ENCODE measurements at regions of chr6 and their contacts with region 1.

Region 1: DNA sequence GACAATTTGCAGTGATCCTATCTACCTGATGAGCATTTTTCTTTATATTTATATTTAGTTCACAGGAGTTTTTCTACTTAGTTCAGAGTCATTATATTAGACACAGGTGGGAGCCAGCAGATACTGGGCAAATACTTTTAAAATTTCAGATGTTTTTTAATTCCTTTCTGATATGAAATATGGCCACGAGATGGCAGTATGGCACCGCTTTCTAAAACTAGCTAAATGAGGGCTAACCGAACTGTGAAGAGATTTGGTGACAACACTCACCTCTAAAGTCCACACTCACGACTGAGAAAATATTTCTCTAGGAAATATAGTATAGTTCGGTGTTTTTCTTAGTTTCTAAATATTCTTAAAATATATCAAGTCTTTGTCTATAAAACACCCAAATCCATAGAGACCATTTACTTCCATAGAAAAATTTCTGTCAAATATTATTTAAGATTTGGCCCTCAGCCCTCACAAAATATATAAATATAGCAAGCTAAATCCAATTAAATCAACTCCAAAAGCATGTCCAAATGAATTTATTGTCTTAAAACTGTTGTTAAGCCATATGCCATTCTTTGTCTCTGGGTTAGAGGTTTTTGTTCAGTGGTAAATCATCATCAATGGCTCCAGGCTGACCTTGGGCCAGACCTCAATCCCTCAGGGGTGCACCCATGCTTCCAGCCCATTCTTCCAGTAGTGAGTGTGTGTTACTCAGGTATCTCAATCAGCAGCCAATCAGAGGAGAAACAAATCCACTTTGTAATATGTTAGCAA is 63.6 kb downstream of the HUS1B start:
- DNase-seq: peak; percentile 81
- ATAC-seq: peak; percentile 75
- H3K4me3 Mint-ChIP-seq: no peak overlapping the region
- H3K27ac Mint-ChIP-seq: no peak overlapping the region
- H3K4me1 Mint-ChIP-seq: peaks cover 5% of the 10 kb centered on the region
- H3K27me3 Mint-ChIP-seq: no peaks in the 10 kb centered on the region

Region 2: DNA sequence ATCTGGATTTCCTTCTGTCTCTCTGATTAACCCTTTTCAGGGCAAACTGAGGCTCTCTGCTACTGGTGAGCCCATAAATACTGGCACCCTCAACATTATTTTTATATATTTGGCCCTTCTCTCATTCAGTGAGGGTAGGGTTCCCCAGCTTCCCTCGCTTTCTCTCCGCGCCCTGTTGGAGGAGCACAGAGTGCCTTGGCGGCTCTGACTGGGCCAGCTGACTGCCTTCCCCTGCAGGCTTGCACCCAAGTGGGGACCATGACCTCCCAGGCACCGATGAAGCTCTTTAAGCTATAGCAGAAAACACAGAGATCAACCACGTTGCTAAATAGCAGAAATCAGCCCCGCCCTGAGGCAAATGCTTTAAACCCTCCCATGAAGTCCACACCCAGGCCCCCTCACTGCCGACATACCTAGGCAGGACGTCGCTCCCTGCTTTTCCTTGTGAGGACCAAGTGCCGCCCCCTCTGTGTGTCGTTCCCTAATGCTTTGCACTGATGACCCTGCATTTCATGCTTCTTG is 41.4 kb before region 1 on chr6:
- CTCF ChIA-PET with region 1: no interaction called
- POLR2A ChIA-PET with region 1: no interaction called
- DNase-seq: no peak
- ATAC-seq: no peak
- H3K4me3 Mint-ChIP-seq: no peak overlapping the region
- H3K27ac Mint-ChIP-seq: no peak overlapping the region
- H3K4me1 Mint-ChIP-seq: peaks cover 29% of the 10 kb centered on the region
- H3K27me3 Mint-ChIP-seq: no peaks in the 10 kb centered on the region

Region 3: DNA sequence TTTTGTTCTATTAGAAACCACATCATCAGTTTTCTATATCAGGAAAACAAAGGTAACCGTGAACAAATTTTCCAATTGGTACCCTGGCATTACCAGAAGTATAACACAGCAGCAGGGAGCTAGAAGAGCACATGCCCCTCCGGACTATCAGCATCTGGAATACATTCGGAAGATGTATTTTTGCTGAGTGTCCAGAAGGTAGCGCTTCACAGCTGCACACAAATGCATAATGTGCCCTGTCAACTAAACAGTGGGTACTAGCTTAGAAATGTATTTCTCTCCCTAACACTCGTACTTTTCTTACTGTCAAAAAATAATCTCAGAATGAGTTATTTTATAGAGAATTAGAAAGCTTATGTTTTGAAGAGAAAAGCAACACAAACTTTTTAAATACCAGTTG is 14.0 kb before region 1 on chr6:
- CTCF ChIA-PET with region 1: interaction called, 28 read pairs
- POLR2A ChIA-PET with region 1: no interaction called
- DNase-seq: no peak
- ATAC-seq: no peak
- H3K4me3 Mint-ChIP-seq: no peak overlapping the region
- H3K27ac Mint-ChIP-seq: no peak overlapping the region
- H3K4me1 Mint-ChIP-seq: peaks cover 31% of the 10 kb centered on the region
- H3K27me3 Mint-ChIP-seq: no peaks in the 10 kb centered on the region

Region 4: DNA sequence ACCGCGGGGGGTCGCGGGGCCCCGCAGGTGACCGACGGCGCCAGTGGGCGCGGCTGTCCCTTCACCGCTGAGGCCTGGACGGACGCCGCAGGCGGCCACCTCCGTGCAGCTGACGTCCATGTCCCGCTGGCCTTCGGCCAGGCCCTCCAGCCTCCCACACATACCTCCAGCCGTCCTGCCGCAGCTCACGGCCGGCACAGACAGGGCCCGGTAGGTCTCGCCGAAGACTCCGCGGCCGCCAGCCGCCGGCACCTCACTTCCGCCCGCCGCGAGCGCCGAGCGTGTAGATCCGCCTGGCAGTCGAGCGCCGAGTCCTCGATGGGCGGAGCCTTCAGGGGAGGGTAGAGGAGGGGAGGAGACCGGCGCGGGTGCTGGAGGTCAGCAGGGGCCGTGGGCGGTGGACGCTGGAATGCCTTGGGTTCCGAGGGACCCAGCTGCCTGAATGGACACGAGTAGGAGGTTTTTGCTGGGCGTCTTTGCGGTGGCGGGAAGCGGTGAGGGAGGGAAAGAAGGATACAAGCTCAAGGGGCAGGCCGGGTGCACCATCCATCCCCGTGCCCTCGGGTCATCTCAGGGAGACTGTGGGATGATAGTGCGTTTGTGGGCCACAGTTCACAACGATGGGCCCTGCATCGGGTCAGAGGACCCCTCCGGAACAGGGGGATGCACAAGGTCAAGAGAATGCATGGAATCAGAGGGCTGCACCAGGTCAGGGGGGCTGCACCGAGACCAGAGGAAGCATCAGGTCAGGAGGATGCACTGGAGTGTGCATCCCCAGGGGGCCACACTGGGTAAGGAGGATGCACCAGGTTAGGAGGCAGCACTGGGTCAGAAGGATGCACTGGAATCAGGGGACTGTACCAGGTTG is 99.8 kb after region 1 on chr6 and contains the start of gene EXOC2:
- CTCF ChIA-PET with region 1: interaction called, 11 read pairs
- POLR2A ChIA-PET with region 1: no interaction called
- DNase-seq: peak; percentile 89
- ATAC-seq: peak; percentile 79
- H3K4me3 Mint-ChIP-seq: peak within 1 kb of the TSS; percentile 96
- H3K27ac Mint-ChIP-seq: peak within 1 kb of the TSS; percentile 92
- H3K4me1 Mint-ChIP-seq: peaks cover 37% of the 10 kb centered on the region
- H3K27me3 Mint-ChIP-seq: no peaks in the 10 kb centered on the region
- total RNA-seq, gene EXOC2: 34.5 to 34.9 TPM

Measured in activated CD8-positive, alpha-beta T cell treated with anti-CD3 and anti-CD28 coated beads, Interleukin-2, amount 10 ng/mL, durations not matched to agents 7 days and 5 days (primary cell).